Activated B cell treated with CpG ODN at 0.5 μM for 24 hours (primary cell): ENCODE measurements at regions of chr1 and their contacts with region 1.

Region 1: GRCh38 chr1:175154629-175155472 is 37.7 kb downstream of the KIAA0040 start:
- DNase-seq: peak; percentile 55
- ATAC-seq: peak; percentile 67
- H3K4me3 Mint-ChIP-seq: no peak overlapping the region
- H3K27ac Mint-ChIP-seq: no peak overlapping the region
- H3K4me1 Mint-ChIP-seq: peaks cover 28% of the 10 kb centered on the region
- H3K27me3 Mint-ChIP-seq: peaks cover 18% of the 10 kb centered on the region
- CTCF ChIP-seq: peak; percentile 70

Region 2: DNA sequence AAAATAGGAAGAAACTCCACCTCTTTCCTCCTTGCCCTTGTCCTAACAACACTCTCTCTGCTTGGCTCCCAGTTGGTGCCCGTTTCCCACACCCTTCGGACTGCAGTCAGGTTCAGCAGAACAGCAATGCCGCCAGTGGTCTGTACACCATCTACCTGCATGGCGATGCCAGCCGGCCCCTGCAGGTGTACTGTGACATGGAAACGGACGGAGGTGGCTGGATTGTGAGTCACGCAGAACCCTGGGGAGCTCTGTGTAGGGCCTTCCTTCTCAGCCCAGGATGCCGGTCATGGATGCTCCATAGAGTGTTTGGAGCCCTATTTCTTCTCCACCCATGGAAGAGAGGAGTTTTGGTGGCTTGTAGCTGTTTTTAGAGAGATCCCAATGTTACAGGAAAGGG is 26.3 kb before region 1 on chr1:
- CTCF ChIA-PET with region 1: no interaction called
- POLR2A ChIA-PET with region 1: no interaction called
- intact Hi-C with region 1: no loop called
- DNase-seq: no peak
- ATAC-seq: no peak
- H3K4me3 Mint-ChIP-seq: no peak overlapping the region
- H3K27ac Mint-ChIP-seq: no peak overlapping the region
- H3K4me1 Mint-ChIP-seq: peaks cover 3% of the 10 kb centered on the region
- H3K27me3 Mint-ChIP-seq: no peaks in the 10 kb centered on the region
- CTCF ChIP-seq: no peak

Region 3: DNA sequence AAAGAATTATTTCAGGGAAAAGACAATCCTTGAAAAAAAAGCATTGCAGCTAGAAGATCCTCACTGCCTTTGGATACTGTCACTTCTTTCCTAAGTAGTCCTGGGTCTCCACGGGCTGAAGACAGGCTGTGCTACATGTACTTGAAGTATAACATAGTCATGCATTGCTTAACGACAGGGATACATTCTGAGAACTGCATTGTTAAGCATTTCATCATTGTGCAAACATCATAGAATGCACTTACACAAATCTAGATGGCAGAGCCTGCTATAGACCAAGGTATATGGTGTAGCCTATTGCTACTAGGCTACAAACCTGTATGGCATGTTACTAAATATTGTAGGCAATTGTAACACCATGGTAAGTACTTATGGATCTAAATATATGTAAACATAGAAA is 16.3 kb before region 1 on chr1:
- CTCF ChIA-PET with region 1: interaction called, 41 read pairs
- POLR2A ChIA-PET with region 1: no interaction called
- intact Hi-C with region 1: no loop called
- DNase-seq: no peak
- ATAC-seq: no peak
- H3K4me3 Mint-ChIP-seq: no peak overlapping the region
- H3K27ac Mint-ChIP-seq: no peak overlapping the region
- H3K4me1 Mint-ChIP-seq: peaks cover 18% of the 10 kb centered on the region
- H3K27me3 Mint-ChIP-seq: peaks cover 21% of the 10 kb centered on the region
- CTCF ChIP-seq: no peak

Region 4: DNA sequence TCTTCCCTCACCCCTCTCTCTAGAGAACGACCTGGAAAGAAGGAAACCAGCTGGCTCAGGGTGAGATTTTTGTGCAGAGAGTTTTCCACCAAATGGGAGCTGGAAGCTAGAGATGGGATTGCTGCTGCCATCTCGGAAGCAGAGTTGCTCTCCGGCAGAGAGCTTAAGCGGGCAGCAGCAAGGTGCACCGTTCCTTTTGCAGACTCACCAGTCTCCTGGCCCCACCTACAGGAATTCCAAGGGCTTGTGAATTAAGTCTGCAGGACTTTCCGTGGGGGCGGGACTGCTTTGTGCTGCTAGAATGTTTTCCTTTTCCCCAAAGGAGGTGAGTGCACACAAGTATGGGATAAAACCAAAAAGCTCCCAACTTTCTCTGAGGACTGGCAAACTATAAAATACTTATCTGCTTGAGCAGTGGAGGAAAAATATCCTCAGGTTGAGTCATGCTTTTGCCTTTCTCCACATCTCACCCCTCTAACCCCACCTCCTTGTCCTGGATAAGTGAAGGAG is 66.9 kb after region 1 on chr1:
- CTCF ChIA-PET with region 1: interaction called, 14 read pairs
- POLR2A ChIA-PET with region 1: no interaction called
- intact Hi-C with region 1: no loop called
- DNase-seq: no peak
- ATAC-seq: no peak
- H3K4me3 Mint-ChIP-seq: no peak overlapping the region
- H3K27ac Mint-ChIP-seq: no peak overlapping the region
- H3K4me1 Mint-ChIP-seq: peaks cover 78% of the 10 kb centered on the region
- H3K27me3 Mint-ChIP-seq: no peaks in the 10 kb centered on the region
- CTCF ChIP-seq: no peak

Region 5: GRCh38 chr1:175338387-175339135 is 183.7 kb after region 1 on chr1:
- CTCF ChIA-PET with region 1: interaction called, 17 read pairs
- POLR2A ChIA-PET with region 1: no interaction called
- intact Hi-C with region 1: loop called (anchors 1 kb)
- DNase-seq: peak; percentile 37
- ATAC-seq: peak; percentile 89
- H3K4me3 Mint-ChIP-seq: no peak overlapping the region
- H3K27ac Mint-ChIP-seq: no peak overlapping the region
- H3K4me1 Mint-ChIP-seq: no peaks in the 10 kb centered on the region
- H3K27me3 Mint-ChIP-seq: peaks cover 8% of the 10 kb centered on the region
- CTCF ChIP-seq: no peak

Region 6: GRCh38 chr1:175481126-175482066 is 326.5 kb after region 1 on chr1:
- CTCF ChIA-PET with region 1: interaction called, 8 read pairs
- POLR2A ChIA-PET with region 1: no interaction called
- intact Hi-C with region 1: loop called (anchors 1 kb)
- DNase-seq: no peak
- ATAC-seq: peak; percentile 50
- H3K4me3 Mint-ChIP-seq: no peak overlapping the region
- H3K27ac Mint-ChIP-seq: no peak overlapping the region
- H3K4me1 Mint-ChIP-seq: peaks cover 2% of the 10 kb centered on the region
- H3K27me3 Mint-ChIP-seq: peaks cover 4% of the 10 kb centered on the region
- CTCF ChIP-seq: no peak

Region 7: GRCh38 chr1:175887981-175888433 is 733.2 kb after region 1 on chr1:
- CTCF ChIA-PET with region 1: no interaction called
- POLR2A ChIA-PET with region 1: no interaction called
- intact Hi-C with region 1: loop called (anchors 1 kb)
- DNase-seq: no peak
- ATAC-seq: peak; percentile 37
- H3K4me3 Mint-ChIP-seq: no peak overlapping the region
- H3K27ac Mint-ChIP-seq: no peak overlapping the region
- H3K4me1 Mint-ChIP-seq: no peaks in the 10 kb centered on the region
- H3K27me3 Mint-ChIP-seq: peaks cover 3% of the 10 kb centered on the region
- CTCF ChIP-seq: no peak